Mammary epithelial cell (primary cell): ENCODE measurements at regions of chr11 and their contacts with region 1.

Region 1: DNA sequence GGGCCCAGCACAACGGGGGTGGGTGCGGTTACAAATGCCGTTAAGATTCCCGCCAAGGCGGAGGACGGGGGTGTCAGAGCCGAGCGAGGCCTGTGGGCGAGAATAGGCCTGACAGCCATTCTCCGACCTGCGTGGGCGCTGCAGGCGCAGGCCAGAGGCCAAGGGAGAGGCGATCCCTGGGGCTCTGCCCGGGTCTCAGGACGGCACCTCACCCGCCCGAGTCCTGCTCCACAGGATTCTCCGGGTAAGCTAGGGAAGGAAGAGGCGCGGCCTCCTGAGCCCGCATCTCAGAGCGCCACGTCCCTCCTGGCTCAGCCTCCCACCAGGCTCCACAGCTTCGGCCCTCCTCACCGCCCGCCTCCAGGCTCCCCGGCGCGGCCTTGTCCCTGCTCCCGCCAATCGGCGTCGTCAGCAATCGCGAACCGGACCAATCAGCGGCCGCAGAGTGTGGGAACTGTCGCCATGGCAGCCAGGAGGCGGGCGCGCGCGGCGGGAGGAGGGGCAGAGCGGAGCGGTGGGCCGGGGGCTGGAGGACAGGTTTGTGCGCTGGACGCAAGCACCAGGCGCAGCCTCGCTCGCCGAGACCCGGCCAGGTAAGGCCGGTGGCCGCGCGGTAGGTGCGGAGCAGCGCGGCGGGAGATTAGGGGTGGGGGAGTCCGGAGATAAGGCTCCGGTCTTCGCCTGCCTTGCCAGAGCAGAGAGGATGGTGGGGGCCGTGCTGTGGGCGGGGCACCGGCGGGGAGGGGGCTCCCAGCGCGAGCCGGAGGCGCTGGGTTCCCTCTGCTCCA is at the start of gene NUCB2:
- DNase-seq: peak; percentile 95
- H3K4me3 ChIP-seq: peak within 1 kb of the TSS; percentile 81 to 91 (median 85)
- H3K27ac ChIP-seq: peak within 1 kb of the TSS; percentile 58
- H3K4me1 ChIP-seq: peaks cover 10% of the 10 kb centered on the region
- H3K27me3 ChIP-seq: no peaks in the 10 kb centered on the region
- CTCF ChIP-seq: no peak
- total RNA-seq, gene NUCB2: 26.3 to 66.5 TPM

Region 2: GRCh38 chr11:16685914-16686313 is 590.5 kb before region 1 on chr11:
- CTCF ChIA-PET with region 1: no interaction called
- dilution Hi-C with region 1: no loop called
- in situ Hi-C with region 1: no loop called
- intact Hi-C with region 1: no loop called
- DNase-seq: no peak
- H3K4me3 ChIP-seq: no peak overlapping the region
- H3K27ac ChIP-seq: no peak overlapping the region
- H3K4me1 ChIP-seq: no peaks in the 10 kb centered on the region
- H3K27me3 ChIP-seq: peaks cover 2% of the 10 kb centered on the region
- CTCF ChIP-seq: no peak

Region 3: DNA sequence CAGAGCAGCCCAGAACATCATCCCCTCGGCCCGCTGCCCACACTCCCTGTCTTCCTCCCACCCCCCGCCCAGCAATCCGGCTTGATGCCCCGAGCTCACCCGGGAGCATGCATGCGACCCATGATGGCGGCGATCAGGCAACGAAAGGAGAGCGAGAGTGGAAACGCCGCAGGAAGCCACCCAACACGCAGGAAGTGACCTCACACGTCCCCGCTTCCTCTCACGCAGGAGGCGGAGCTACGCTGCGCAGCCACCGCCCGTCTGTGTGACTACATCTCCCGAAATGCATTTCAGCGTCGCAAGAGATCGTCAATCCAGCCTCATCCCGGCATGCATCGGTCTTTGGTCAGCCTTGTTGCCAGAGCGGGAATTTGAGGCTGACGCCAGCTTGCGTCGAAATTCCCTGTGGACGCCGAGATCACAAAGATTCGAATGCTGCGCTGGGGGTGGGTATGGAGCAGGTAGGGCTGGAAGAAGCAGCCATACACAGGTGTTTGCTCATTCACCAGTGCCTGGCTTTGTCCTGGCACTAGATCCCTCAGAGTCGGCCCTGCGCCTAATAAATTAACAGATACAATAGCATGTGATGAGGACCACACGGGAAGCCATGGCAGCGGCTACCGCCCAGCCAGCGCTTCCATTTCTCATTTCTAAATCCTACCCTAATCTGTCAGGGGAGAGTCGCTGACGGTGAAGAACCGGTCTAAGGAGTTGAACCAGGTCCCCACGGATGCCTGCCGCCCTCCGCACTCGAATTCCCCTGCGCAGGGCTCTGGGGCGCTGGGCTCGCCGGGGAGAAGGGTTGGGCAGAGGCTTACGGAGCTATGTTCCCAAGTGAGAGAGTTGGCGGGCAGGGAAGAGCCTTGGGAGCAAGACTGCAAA is 198.7 kb before region 1 on chr11 and contains the start of gene RPS13:
- CTCF ChIA-PET with region 1: no interaction called
- dilution Hi-C with region 1: no loop called
- in situ Hi-C with region 1: no loop called
- intact Hi-C with region 1: loop called (anchors 5 kb)
- DNase-seq: peak; percentile 99
- H3K4me3 ChIP-seq: peak within 1 kb of the TSS; percentile 69 to 89 (median 81)
- H3K27ac ChIP-seq: peak within 1 kb of the TSS; percentile 86
- H3K4me1 ChIP-seq: peaks cover 25% of the 10 kb centered on the region
- H3K27me3 ChIP-seq: no peaks in the 10 kb centered on the region
- CTCF ChIP-seq: no peak
- total RNA-seq, gene RPS13: 475 to 878 TPM

Region 4: GRCh38 chr11:17230867-17231851 is 45.3 kb before region 1 on chr11:
- CTCF ChIA-PET with region 1: no interaction called
- dilution Hi-C with region 1: no loop called
- in situ Hi-C with region 1: no loop called
- intact Hi-C with region 1: loop called (anchors 1 kb)
- DNase-seq: no peak
- H3K4me3 ChIP-seq: no peak overlapping the region
- H3K27ac ChIP-seq: no peak overlapping the region
- H3K4me1 ChIP-seq: no peaks in the 10 kb centered on the region
- H3K27me3 ChIP-seq: no peaks in the 10 kb centered on the region
- CTCF ChIP-seq: no peak

Region 5: GRCh38 chr11:17314232-17314547 is 37.8 kb after region 1 on chr11:
- CTCF ChIA-PET with region 1: no interaction called
- dilution Hi-C with region 1: loop called (anchors 5 kb)
- in situ Hi-C with region 1: no loop called
- intact Hi-C with region 1: loop called (anchors 2 kb)
- DNase-seq: peak; percentile 91
- H3K4me3 ChIP-seq: no peak overlapping the region
- H3K27ac ChIP-seq: peak overlapping the region; percentile 32
- H3K4me1 ChIP-seq: peaks cover 19% of the 10 kb centered on the region
- H3K27me3 ChIP-seq: no peaks in the 10 kb centered on the region
- CTCF ChIP-seq: no peak